Activated CD4-positive, alpha-beta T cell treated with anti-CD3 and anti-CD28 coated beads, Interleukin-2, amount 10 ng/mL, durations not matched to agents 24 days and 14 days (primary cell): ENCODE measurements at regions of chr22 and their contacts with region 1.

Region 1: DNA sequence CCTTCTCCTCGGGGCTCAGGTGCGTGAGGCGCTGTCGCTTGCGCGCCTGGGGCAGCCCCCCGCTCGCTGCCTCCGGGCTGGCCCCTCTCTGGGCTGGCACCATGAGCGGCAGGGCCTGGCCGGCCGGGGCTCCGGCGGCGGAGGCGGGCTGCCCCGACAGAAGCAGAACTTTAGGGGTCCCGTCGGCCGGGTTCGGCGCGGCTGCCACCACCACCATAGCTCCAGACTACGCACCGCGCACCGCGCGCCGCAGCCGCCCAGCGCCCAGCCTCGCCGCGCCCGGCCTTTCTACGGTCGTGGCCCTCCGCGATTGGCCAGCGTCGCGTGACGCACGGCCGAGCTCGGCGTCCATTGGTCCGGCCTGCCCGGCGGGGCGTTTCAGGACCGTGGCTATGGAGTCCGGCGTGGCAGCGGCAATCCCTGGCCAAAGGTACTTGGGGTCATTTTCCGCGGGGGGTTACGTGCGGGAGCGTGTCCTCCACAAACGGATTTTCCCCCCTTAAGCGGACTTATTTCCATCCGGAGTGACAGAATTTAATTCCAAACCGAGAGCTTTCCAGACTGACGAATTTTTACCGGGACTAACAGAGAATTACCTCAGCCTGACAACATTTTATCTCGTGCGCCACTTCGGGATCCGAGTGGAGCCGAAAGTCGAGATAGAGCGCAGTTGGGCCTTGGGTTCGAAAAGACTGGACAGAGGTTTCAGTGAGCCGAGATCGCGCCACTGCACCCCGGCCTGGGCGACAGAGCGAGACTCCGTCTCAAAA is at the start of gene XBP1:
- DNase-seq: peak; percentile 98
- H3K4me3 Mint-ChIP-seq: peak within 1 kb of the TSS; percentile 89
- H3K27ac Mint-ChIP-seq: peak within 1 kb of the TSS; percentile 95
- H3K4me1 Mint-ChIP-seq: peaks cover 41% of the 10 kb centered on the region
- H3K27me3 Mint-ChIP-seq: no peaks in the 10 kb centered on the region
- total RNA-seq, gene XBP1: 133 and 135 TPM in 2 replicates

Region 2: GRCh38 chr22:28402539-28402938 is 398.0 kb before region 1 on chr22:
- intact Hi-C with region 1: loop called (anchors 2 kb)
- DNase-seq: no peak
- H3K4me3 Mint-ChIP-seq: peak overlapping the region; percentile 39
- H3K27ac Mint-ChIP-seq: peak overlapping the region; percentile 80
- H3K4me1 Mint-ChIP-seq: peaks cover 32% of the 10 kb centered on the region
- H3K27me3 Mint-ChIP-seq: peaks cover 1% of the 10 kb centered on the region

Region 3: GRCh38 chr22:28629420-28630176 is 170.9 kb before region 1 on chr22:
- intact Hi-C with region 1: no loop called
- DNase-seq: no peak
- H3K4me3 Mint-ChIP-seq: no peak overlapping the region
- H3K27ac Mint-ChIP-seq: no peak overlapping the region
- H3K4me1 Mint-ChIP-seq: no peaks in the 10 kb centered on the region
- H3K27me3 Mint-ChIP-seq: peaks cover 65% of the 10 kb centered on the region

Region 4: GRCh38 chr22:28741758-28742561 is 58.5 kb before region 1 on chr22 and contains the starts of genes CHEK2 and HSCB:
- intact Hi-C with region 1: loop called (anchors 1 kb)
- DNase-seq: peak; percentile 99
- H3K4me3 Mint-ChIP-seq: peak within 1 kb of the TSS; percentile 92
- H3K27ac Mint-ChIP-seq: peak within 1 kb of the TSS; percentile 86
- H3K4me1 Mint-ChIP-seq: peaks cover 25% of the 10 kb centered on the region
- H3K27me3 Mint-ChIP-seq: no peaks in the 10 kb centered on the region
- total RNA-seq, gene CHEK2: 29.8 and 32.7 TPM in 2 replicates
- total RNA-seq, gene HSCB: 12.8 and 14.1 TPM in 2 replicates

Region 5: GRCh38 chr22:28810821-28811491 is 10.5 kb after region 1 on chr22:
- intact Hi-C with region 1: loop called (anchors 1 kb)
- DNase-seq: peak; percentile 89
- H3K4me3 Mint-ChIP-seq: peak overlapping the region; percentile 73
- H3K27ac Mint-ChIP-seq: peak overlapping the region; percentile 89
- H3K4me1 Mint-ChIP-seq: peaks cover 76% of the 10 kb centered on the region
- H3K27me3 Mint-ChIP-seq: no peaks in the 10 kb centered on the region

Region 6: GRCh38 chr22:28829358-28830181 is 29.1 kb after region 1 on chr22:
- intact Hi-C with region 1: loop called (anchors 2 kb)
- DNase-seq: peak; percentile 93
- H3K4me3 Mint-ChIP-seq: peak overlapping the region; percentile 34
- H3K27ac Mint-ChIP-seq: no peak overlapping the region
- H3K4me1 Mint-ChIP-seq: peaks cover 23% of the 10 kb centered on the region
- H3K27me3 Mint-ChIP-seq: no peaks in the 10 kb centered on the region

Region 7: DNA sequence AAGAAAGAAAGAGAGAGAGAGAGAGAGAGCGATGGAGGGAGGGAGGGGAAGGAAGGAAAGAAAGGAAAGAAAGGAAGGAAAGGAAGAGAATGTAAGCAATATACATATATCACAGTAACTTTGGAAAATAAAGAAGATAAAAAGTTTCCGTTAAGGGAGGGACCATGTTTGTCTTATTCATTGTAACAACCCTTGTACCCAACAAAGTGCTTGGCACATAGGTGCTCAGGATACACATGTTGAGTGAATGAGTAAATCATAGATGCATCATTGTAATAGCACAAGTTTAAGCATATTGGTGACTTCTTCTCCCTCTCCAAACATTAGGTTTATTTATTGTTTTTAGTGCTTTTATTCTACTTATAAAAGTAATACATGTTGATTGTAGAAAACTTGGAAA is 43.1 kb after region 1 on chr22:
- intact Hi-C with region 1: no loop called
- DNase-seq: no peak
- H3K4me3 Mint-ChIP-seq: no peak overlapping the region
- H3K27ac Mint-ChIP-seq: no peak overlapping the region
- H3K4me1 Mint-ChIP-seq: no peaks in the 10 kb centered on the region
- H3K27me3 Mint-ChIP-seq: no peaks in the 10 kb centered on the region

Region 8: GRCh38 chr22:29117799-29118477 is 317.4 kb after region 1 on chr22:
- intact Hi-C with region 1: no loop called
- DNase-seq: no peak
- H3K4me3 Mint-ChIP-seq: no peak overlapping the region
- H3K27ac Mint-ChIP-seq: no peak overlapping the region
- H3K4me1 Mint-ChIP-seq: peaks cover 5% of the 10 kb centered on the region
- H3K27me3 Mint-ChIP-seq: peaks cover 27% of the 10 kb centered on the region